CD4-positive, alpha-beta T cell (primary cell): ENCODE measurements at regions of chr2 and their contacts with region 1.

Region 1: GRCh38 chr2:118046634-118047210 is 32.9 kb upstream of the CCDC93 start:
- DNase-seq: peak in 3 of 14 experiments; percentile 45 to 56 (median 54)
- ATAC-seq: no peak
- H3K4me3 ChIP-seq: no peak overlapping the region
- H3K4me3 Mint-ChIP-seq: no peak overlapping the region
- H3K27ac ChIP-seq: no peak overlapping the region
- H3K27ac Mint-ChIP-seq: no peak overlapping the region
- H3K4me1 ChIP-seq: no peaks in the 10 kb centered on the region
- H3K4me1 Mint-ChIP-seq: no peaks in the 10 kb centered on the region
- H3K27me3 ChIP-seq: peaks cover 13 to 30% of the 10 kb centered on the region in 2 experiments
- H3K27me3 Mint-ChIP-seq: peaks cover 91% of the 10 kb centered on the region
- CTCF ChIP-seq: peak; percentile 68

Region 2: DNA sequence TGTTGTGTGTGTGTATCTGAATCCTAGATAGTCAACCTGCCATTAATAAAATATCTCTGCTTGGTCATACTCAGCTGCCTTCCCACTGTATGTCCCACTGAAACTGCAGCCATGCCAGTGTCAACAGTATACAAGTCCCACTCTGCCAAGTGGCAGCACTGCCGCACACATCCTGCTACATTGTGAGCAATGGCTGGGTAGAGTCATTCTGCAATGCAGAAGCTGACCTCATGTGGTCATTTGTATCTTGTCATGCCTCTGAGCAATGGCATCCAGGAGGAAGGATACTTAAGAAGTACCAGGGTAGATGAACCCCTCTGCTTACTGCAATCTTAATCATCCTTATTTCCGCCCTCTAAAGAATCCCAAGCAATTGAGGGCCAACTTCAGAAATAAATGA is 534.4 kb before region 1 on chr2:
- CTCF ChIA-PET with region 1: no interaction called
- POLR2A ChIA-PET with region 1: no interaction called
- intact Hi-C with region 1: no loop called
- DNase-seq: no peak
- ATAC-seq: no peak
- H3K4me3 ChIP-seq: no peak overlapping the region
- H3K4me3 Mint-ChIP-seq: no peak overlapping the region
- H3K27ac ChIP-seq: no peak overlapping the region
- H3K27ac Mint-ChIP-seq: no peak overlapping the region
- H3K4me1 ChIP-seq: no peaks in the 10 kb centered on the region
- H3K4me1 Mint-ChIP-seq: no peaks in the 10 kb centered on the region
- H3K27me3 ChIP-seq: no peaks in the 10 kb centered on the region
- H3K27me3 Mint-ChIP-seq: no peaks in the 10 kb centered on the region
- CTCF ChIP-seq: no peak

Region 3: GRCh38 chr2:118148809-118149208 is 102.1 kb after region 1 on chr2:
- CTCF ChIA-PET with region 1: no interaction called
- POLR2A ChIA-PET with region 1: no interaction called
- intact Hi-C with region 1: loop called in 1 of 2 experiments (anchors 5 kb)
- DNase-seq: no peak
- ATAC-seq: no peak
- H3K4me3 ChIP-seq: no peak overlapping the region
- H3K4me3 Mint-ChIP-seq: no peak overlapping the region
- H3K27ac ChIP-seq: no peak overlapping the region
- H3K27ac Mint-ChIP-seq: no peak overlapping the region
- H3K4me1 ChIP-seq: no peaks in the 10 kb centered on the region
- H3K4me1 Mint-ChIP-seq: no peaks in the 10 kb centered on the region
- H3K27me3 ChIP-seq: no peaks in the 10 kb centered on the region
- H3K27me3 Mint-ChIP-seq: peaks cover 22% of the 10 kb centered on the region
- CTCF ChIP-seq: no peak

Region 4: DNA sequence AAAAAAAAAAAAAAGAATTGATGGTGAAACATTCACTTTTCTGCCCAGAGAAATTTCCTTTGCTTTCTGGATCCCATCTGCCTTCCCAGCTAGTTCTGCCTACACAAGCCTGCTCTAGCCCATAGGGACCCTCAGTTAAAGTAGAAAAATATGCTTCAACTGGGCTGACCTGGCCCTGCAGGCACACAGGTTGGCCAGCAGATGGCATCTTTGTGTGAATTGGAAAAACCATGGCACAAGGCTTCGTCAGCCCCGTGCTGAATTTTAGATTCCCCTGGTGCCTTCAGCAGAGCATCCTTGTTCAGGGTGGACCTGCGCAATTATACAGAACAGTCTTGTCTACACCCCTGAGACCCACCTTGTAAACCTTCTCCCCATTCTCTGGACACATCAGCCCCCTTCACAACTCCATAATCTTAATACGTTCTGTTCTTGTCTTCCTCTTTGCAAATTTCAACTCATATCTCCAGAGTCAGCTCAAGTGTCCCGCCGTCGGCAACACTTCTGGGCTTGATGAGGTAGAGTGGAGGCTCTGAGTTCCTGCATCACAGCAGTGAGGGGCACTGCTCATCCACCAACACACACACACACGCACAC is 156.1 kb after region 1 on chr2:
- CTCF ChIA-PET with region 1: no interaction called
- POLR2A ChIA-PET with region 1: no interaction called
- intact Hi-C with region 1: loop called in 1 of 2 experiments (anchors 10 kb)
- DNase-seq: peak; percentile 28 to 72 (median 40)
- ATAC-seq: peak; percentile 98
- H3K4me3 ChIP-seq: no peak overlapping the region
- H3K4me3 Mint-ChIP-seq: peak overlapping the region; percentile 0
- H3K27ac ChIP-seq: no peak overlapping the region
- H3K27ac Mint-ChIP-seq: no peak overlapping the region
- H3K4me1 ChIP-seq: peaks cover 6% of the 10 kb centered on the region
- H3K4me1 Mint-ChIP-seq: peaks cover 5% of the 10 kb centered on the region
- H3K27me3 ChIP-seq: no peaks in the 10 kb centered on the region
- H3K27me3 Mint-ChIP-seq: peaks cover 39% of the 10 kb centered on the region
- CTCF ChIP-seq: peak; percentile 75

Region 5: GRCh38 chr2:118242216-118242615 is 195.5 kb after region 1 on chr2:
- CTCF ChIA-PET with region 1: no interaction called
- POLR2A ChIA-PET with region 1: no interaction called
- intact Hi-C with region 1: no loop called
- DNase-seq: no peak
- ATAC-seq: no peak
- H3K4me3 ChIP-seq: no peak overlapping the region
- H3K4me3 Mint-ChIP-seq: no peak overlapping the region
- H3K27ac ChIP-seq: no peak overlapping the region
- H3K27ac Mint-ChIP-seq: no peak overlapping the region
- H3K4me1 ChIP-seq: no peaks in the 10 kb centered on the region
- H3K4me1 Mint-ChIP-seq: no peaks in the 10 kb centered on the region
- H3K27me3 ChIP-seq: peaks cover 0 to 5% of the 10 kb centered on the region in 2 experiments
- H3K27me3 Mint-ChIP-seq: peaks cover 41% of the 10 kb centered on the region
- CTCF ChIP-seq: no peak

Region 6: GRCh38 chr2:118855451-118856279 is 808.9 kb after region 1 on chr2:
- CTCF ChIA-PET with region 1: interaction called, 10 read pairs
- POLR2A ChIA-PET with region 1: interaction called, 3 read pairs
- intact Hi-C with region 1: loop called (anchors 1 to 2 kb)
- DNase-seq: peak; percentile 68 to 88 (median 77)
- ATAC-seq: peak; percentile 94
- H3K4me3 ChIP-seq: peak overlapping the region; percentile 42
- H3K4me3 Mint-ChIP-seq: peak overlapping the region; percentile 77
- H3K27ac ChIP-seq: no peak overlapping the region
- H3K27ac Mint-ChIP-seq: no peak overlapping the region
- H3K4me1 ChIP-seq: peaks cover 46% of the 10 kb centered on the region
- H3K4me1 Mint-ChIP-seq: peaks cover 30% of the 10 kb centered on the region
- H3K27me3 ChIP-seq: peaks cover 96 to 98% of the 10 kb centered on the region in 2 experiments
- H3K27me3 Mint-ChIP-seq: peaks cover 95% of the 10 kb centered on the region
- CTCF ChIP-seq: peak; percentile 95

Region 7: GRCh38 chr2:118865106-118865505 is 818.4 kb after region 1 on chr2:
- CTCF ChIA-PET with region 1: no interaction called
- POLR2A ChIA-PET with region 1: no interaction called
- intact Hi-C with region 1: loop called in 1 of 2 experiments (anchors 2 kb)
- DNase-seq: peak in 3 of 14 experiments; percentile 34 to 58 (median 56)
- ATAC-seq: peak; percentile 73
- H3K4me3 ChIP-seq: no peak overlapping the region
- H3K4me3 Mint-ChIP-seq: no peak overlapping the region
- H3K27ac ChIP-seq: no peak overlapping the region
- H3K27ac Mint-ChIP-seq: no peak overlapping the region
- H3K4me1 ChIP-seq: no peaks in the 10 kb centered on the region
- H3K4me1 Mint-ChIP-seq: no peaks in the 10 kb centered on the region
- H3K27me3 ChIP-seq: peaks cover 22 to 46% of the 10 kb centered on the region in 2 experiments
- H3K27me3 Mint-ChIP-seq: peaks cover 56% of the 10 kb centered on the region
- CTCF ChIP-seq: peak; percentile 61

Region 8: GRCh38 chr2:119174216-119175037 is 1127.7 kb after region 1 on chr2:
- CTCF ChIA-PET with region 1: no interaction called
- POLR2A ChIA-PET with region 1: no interaction called
- intact Hi-C with region 1: loop called (anchors 2 to 10 kb)
- DNase-seq: peak; percentile 22 to 69 (median 48)
- ATAC-seq: peak; percentile 59
- H3K4me3 ChIP-seq: no peak overlapping the region
- H3K4me3 Mint-ChIP-seq: no peak overlapping the region
- H3K27ac ChIP-seq: no peak overlapping the region
- H3K27ac Mint-ChIP-seq: no peak overlapping the region
- H3K4me1 ChIP-seq: peaks cover 2% of the 10 kb centered on the region
- H3K4me1 Mint-ChIP-seq: no peaks in the 10 kb centered on the region
- H3K27me3 ChIP-seq: no peaks in the 10 kb centered on the region
- H3K27me3 Mint-ChIP-seq: peaks cover under 1% of the 10 kb centered on the region
- CTCF ChIP-seq: peak; percentile 90

Region 9: DNA sequence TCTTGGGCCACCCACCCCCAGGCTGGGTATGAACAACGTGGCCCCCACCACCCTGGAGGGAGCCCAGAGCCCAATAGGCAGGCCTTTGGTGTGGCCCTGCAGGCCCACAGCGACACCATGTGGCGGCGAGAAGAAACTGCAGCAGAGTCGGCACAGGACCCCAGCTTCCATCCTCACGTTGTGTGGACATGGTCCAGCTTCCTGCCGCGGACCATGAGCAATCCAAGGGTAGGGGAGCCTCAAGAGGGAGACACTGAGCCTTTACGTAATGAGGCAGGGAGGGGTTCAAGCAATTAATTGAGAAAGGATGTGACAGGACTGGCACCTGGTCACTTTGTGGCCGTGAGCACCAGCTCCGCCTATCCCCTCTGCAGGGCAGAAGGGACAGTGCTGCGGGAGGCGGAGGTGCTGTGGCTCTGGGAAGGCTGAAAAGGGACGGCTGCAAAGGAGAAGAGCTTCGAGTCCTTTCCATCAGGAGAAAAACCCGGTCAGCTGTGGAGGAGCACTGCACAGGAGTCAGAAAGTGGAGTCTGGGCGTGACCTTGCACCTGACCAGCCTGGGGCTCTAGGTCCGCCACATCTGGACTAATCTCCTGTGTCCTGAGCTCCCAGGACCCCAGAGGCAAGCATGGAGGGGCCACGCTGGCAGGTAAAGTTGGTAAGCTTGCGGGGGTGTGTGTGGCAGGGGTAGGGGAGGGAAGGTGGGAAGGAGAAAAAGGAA is 1429.7 kb after region 1 on chr2:
- CTCF ChIA-PET with region 1: interaction called, 3 read pairs
- POLR2A ChIA-PET with region 1: no interaction called
- intact Hi-C with region 1: loop called in 1 of 2 experiments (anchors 5 kb)
- DNase-seq: peak in 8 of 14 experiments; percentile 5 to 60 (median 16)
- ATAC-seq: peak; percentile 21
- H3K4me3 ChIP-seq: no peak overlapping the region
- H3K4me3 Mint-ChIP-seq: no peak overlapping the region
- H3K27ac ChIP-seq: no peak overlapping the region
- H3K27ac Mint-ChIP-seq: no peak overlapping the region
- H3K4me1 ChIP-seq: no peaks in the 10 kb centered on the region
- H3K4me1 Mint-ChIP-seq: no peaks in the 10 kb centered on the region
- H3K27me3 ChIP-seq: no peaks in the 10 kb centered on the region
- H3K27me3 Mint-ChIP-seq: peaks cover 20% of the 10 kb centered on the region
- CTCF ChIP-seq: peak; percentile 68